Mammary epithelial cell (primary cell): ENCODE measurements at regions of chr9 and their contacts with region 1.

Region 1: DNA sequence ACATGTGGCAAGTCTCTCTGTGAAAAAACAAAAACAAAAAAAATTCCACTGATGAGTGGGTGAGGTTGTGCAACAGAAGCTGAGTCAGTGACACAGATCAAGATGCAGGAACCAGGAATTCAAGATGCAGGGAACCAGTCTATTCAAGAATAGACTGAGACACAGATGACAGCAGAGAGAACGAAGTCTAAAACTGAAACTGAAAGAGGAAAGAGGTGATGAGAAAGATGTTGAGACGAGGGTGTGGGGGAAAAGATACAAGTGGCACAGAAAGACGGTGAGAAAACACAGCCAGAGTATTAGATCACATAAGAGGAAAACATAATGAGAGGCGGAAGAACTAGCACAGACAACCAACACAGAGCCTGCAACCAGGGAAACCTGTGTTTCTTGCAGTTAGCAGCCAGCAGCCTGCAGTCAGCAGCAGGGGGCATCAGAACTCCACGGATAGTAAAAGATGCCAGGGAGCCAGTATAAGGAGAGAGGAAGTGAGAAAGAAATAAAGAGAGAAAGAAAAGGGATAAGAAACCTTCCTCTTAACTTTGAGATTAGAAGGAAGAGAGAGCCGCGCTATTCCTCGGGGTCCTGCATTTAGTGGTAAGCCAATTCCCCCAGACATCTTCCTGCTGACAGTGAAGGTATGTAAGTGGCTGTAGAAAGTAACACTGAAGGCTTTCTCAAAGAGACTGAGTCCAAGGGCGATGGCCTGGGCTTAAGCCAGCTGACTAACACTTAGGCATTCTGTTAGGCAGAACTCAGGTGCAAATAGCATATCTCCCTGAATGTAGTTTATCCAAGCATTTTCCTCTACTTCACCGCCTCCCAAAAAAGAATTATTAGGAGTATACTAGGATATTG is 79.0 kb downstream of the TLR4 start:
- DNase-seq: peak; percentile 71
- H3K4me3 ChIP-seq: peak overlapping the region; percentile 54 to 72 (median 55)
- H3K27ac ChIP-seq: no peak overlapping the region
- H3K4me1 ChIP-seq: peaks cover 7% of the 10 kb centered on the region
- H3K27me3 ChIP-seq: no peaks in the 10 kb centered on the region
- CTCF ChIP-seq: peak; percentile 92 to 93

Region 2: DNA sequence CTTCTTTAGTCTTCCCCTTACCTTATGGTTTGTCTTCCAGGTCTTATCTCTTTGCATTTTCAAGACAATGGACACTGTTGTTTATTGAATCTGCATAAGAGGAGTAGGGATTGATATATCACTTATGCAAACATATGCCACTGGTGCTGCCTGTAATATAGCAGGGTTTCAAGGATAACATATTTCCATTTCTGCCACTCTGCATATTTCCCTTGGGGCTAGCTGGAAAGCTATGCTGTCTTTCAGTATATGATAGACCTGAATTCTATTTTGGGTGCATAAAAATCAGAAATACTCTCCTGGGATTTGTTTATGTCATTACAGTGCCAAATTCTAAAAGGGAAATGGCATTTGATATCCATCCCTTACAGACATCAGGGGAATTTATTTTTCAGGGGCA is 321.2 kb after region 1 on chr9:
- CTCF ChIA-PET with region 1: no interaction called
- dilution Hi-C with region 1: no loop called
- in situ Hi-C with region 1: no loop called
- intact Hi-C with region 1: loop called (anchors 10 kb)
- DNase-seq: no peak
- H3K4me3 ChIP-seq: no peak overlapping the region
- H3K27ac ChIP-seq: no peak overlapping the region
- H3K4me1 ChIP-seq: no peaks in the 10 kb centered on the region
- H3K27me3 ChIP-seq: no peaks in the 10 kb centered on the region
- CTCF ChIP-seq: no peak

Region 3: DNA sequence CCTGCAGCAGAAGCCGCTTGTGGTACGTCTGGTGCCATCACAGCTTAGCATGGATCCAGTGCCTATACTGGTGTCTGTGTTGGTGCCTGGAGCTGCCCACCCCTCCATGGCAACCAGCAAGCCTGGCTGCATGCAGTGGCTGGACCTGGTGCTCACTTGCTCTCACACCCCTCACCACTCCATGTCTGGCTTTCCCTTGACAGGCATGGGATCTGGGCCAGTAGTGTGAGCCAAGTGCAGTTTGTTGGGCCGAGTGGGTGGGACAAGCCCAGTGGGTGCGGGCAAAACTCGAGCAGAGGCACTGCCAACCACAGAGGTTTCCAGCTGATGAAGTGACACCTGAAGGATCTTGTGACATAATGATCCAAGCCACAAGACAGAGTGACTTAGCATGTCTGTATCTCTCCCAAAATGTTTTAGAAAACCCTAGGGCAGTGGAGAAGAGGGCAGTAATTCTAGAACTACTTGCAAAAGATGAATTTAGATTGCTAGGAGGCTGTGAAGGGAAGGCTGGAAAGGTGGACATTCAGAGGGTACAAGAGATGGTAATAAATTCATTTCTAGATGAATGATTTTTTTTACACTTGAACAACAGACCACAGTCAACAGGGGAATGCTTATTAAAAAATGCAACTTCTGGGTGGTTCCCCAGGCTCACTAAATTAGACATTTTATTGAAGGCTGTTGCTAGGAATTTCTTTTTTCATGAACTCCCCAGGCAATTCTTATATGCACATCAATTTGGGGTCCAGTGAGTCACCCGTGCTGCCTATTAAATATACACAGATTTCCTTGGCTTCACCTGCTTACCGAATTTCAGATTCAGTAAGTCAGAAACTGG is 581.3 kb after region 1 on chr9:
- CTCF ChIA-PET with region 1: no interaction called
- dilution Hi-C with region 1: no loop called
- in situ Hi-C with region 1: no loop called
- intact Hi-C with region 1: loop called (anchors 10 kb)
- DNase-seq: no peak
- H3K4me3 ChIP-seq: no peak overlapping the region
- H3K27ac ChIP-seq: no peak overlapping the region
- H3K4me1 ChIP-seq: peaks cover 5% of the 10 kb centered on the region
- H3K27me3 ChIP-seq: no peaks in the 10 kb centered on the region
- CTCF ChIP-seq: no peak

Region 4: DNA sequence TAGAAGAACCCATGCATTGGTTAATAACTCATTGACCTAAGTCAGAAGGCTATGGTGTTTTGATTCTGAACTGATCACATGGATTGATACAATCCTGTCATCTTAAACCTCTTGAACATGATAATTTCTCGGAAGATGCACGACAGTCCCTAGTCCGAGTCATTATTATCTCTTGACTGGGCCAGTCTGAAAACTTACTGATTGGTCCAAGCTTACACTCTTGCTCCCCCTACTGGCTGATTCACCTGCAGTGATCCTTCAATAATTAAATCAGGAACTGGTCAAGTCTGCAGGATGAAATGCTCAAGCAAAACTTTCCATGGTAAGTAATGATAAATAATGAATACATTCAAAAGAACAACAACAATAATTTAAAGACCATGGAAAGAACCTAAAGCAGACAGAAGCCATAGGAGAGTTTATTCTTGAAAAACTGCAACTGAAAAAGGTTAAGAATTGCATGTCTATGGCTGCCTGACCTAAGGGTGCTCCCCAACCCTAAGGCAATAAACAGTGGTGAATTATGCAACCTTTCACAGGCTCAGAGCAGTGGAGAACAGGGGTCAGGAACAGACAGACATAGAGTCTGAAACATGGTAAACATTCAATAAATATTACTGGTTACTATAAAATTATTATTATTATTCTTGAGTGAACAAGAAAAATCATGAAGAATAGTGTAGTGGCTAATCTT is 1506.7 kb after region 1 on chr9:
- CTCF ChIA-PET with region 1: no interaction called
- dilution Hi-C with region 1: no loop called
- in situ Hi-C with region 1: no loop called
- intact Hi-C with region 1: loop called (anchors 10 kb)
- DNase-seq: peak; percentile 50
- H3K4me3 ChIP-seq: no peak overlapping the region
- H3K27ac ChIP-seq: no peak overlapping the region
- H3K4me1 ChIP-seq: no peaks in the 10 kb centered on the region
- H3K27me3 ChIP-seq: no peaks in the 10 kb centered on the region
- CTCF ChIP-seq: peak; percentile 49 to 66